Activated CD4-positive, alpha-beta T cell treated with anti-CD3 and anti-CD28 coated beads, Interleukin-2, amount 10 ng/mL, durations not matched to agents 24 days and 14 days (primary cell): ENCODE measurements at regions of chr6 and their contacts with region 1.

Region 1: DNA sequence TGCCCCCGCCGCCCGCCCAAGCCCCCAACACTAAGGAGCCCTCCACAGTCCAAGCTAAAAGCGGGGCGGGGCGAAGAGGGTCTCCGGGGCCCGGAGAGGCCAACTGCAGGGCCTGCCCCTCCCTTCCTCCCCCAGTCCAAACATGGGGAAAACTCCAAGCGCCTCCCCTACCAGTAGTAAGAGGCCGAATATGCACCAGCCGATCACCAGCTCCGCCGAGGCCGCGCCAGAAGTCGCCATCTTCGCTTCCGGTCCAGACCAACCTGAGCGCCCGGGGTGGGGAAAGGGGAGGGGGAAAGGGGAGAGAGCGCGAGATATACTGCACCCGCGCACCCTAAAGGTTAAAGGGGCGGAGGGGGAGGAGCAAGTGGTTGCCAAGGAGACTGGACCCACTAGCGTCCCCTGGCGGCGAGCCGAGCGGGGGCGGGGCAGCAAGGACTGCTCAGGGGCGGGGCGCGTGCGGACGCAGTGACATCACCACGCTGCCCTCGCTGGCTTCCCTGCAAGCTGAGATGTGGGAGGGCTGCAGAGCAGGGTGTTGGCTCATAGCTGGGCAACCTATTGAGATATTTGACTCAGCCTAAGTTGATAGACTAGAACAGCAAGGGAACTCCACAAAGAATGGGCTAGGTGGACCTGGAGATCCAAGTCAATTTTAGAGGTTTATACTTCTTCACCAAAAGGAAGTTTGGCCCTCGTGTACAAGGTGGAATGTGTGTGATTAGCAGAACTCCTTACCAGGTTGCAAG is at the start of gene LMBRD1:
- DNase-seq: peak; percentile 100
- H3K4me3 Mint-ChIP-seq: peak within 1 kb of the TSS; percentile 90
- H3K27ac Mint-ChIP-seq: peak within 1 kb of the TSS; percentile 84
- H3K4me1 Mint-ChIP-seq: peaks cover 31% of the 10 kb centered on the region
- H3K27me3 Mint-ChIP-seq: no peaks in the 10 kb centered on the region
- total RNA-seq, gene LMBRD1: 13.0 and 13.5 TPM in 2 replicates

Region 2: DNA sequence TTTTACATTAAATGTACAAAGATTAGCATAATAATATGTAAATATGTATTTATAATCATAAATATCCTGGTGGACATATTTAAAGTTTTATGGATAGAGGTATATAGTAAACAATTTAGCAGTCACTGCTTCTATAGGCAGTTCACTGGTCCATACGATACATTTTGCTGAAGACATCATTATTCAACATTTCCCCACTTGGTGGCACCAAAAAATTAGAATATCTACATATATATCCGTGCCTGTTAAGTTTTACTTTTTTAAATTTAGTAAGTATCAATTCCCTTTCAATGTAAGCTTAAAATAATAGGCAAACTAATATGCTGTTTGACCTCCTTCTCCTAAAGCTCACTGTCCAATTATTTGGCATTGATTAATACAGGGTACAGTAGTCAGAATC is 64.2 kb before region 1 on chr6:
- intact Hi-C with region 1: loop called (anchors 5 kb)
- DNase-seq: no peak
- H3K4me3 Mint-ChIP-seq: no peak overlapping the region
- H3K27ac Mint-ChIP-seq: no peak overlapping the region
- H3K4me1 Mint-ChIP-seq: no peaks in the 10 kb centered on the region
- H3K27me3 Mint-ChIP-seq: no peaks in the 10 kb centered on the region

Region 3: GRCh38 chr6:69816026-69816425 is 19.2 kb after region 1 on chr6:
- intact Hi-C with region 1: loop called (anchors 1 kb)
- DNase-seq: peak; percentile 68
- H3K4me3 Mint-ChIP-seq: peak overlapping the region; percentile 82
- H3K27ac Mint-ChIP-seq: peak overlapping the region; percentile 86
- H3K4me1 Mint-ChIP-seq: peaks cover 42% of the 10 kb centered on the region
- H3K27me3 Mint-ChIP-seq: no peaks in the 10 kb centered on the region

Region 4: DNA sequence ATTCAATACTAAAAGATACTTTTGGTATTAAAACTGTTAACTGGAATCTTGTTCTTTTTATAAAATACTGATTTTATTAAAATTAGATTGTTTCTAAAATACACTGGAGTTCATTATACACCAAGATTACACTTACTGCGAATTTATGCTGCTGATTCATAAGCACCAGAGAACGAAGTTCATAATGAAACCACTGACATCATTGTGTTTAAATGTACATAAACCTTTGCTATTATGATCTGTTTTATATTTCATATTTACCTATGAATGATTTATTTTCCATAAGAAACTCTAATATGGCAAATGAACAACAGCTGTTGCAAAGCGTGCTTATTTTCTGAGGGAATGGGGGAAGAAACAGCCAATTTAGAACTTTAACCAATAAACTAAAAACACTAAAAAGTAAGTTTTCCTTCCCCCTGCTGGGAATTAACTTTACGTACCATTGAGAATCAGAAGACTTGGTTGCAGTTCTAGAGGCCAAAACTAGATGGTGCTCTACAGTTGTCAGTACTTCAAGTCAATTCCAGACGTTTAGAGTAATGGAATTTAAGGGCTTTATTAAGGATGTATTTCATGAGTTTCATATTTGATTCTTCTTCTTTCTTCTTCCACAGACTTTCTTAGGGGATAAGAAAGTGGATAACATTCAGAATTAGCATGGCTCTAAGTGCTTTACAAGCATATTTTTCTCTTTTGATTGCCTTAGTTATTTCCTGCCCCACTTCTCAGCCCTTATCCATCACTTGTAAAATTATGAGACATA is 38.8 kb after region 1 on chr6:
- intact Hi-C with region 1: loop called (anchors 2 kb)
- DNase-seq: peak; percentile 71
- H3K4me3 Mint-ChIP-seq: no peak overlapping the region
- H3K27ac Mint-ChIP-seq: no peak overlapping the region
- H3K4me1 Mint-ChIP-seq: peaks cover 2% of the 10 kb centered on the region
- H3K27me3 Mint-ChIP-seq: peaks cover 35% of the 10 kb centered on the region

Region 5: DNA sequence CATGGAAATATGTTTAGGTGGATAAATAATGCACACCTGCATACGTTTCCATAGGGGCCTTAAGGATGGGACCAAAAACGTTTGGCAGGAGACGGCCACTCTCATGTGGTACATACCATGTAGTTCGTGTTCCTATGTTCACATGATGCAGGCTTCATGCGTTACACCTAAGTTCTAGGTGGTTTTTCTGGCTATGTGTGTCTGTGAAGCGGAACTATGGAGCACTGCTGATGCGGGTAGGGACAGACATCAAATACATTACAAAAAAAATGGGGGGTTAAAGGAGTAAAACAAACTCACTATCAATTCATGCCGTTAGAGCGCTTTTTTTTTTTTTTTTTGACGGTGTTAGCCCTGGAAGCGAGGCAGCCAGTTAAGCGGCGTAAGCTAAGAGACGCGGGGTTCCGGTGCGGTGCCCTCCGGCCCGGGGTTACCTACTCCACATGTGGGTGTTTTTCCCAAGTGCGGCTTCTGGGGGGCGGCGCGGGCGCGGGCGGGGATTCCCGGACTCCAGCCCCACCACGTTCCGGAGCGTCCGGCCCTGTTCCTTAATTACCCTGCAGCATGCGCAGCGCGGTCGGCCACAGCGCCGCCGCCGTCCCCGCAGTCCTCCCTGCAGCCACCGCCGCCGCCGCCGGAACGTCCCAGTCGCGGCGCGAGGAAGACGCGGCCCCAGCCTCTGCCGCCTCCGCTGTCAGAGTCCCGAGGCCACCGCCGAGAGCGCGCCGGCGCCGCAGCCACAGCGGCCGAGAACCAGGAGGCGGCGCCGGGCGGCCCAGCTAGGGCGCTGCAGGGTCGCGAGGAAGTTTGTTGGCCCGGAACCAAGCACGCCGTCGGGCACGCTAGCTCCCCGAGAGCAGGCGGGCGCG is 70.2 kb after region 1 on chr6:
- intact Hi-C with region 1: loop called (anchors 2 kb)
- DNase-seq: peak; percentile 87
- H3K4me3 Mint-ChIP-seq: peak overlapping the region; percentile 79
- H3K27ac Mint-ChIP-seq: peak overlapping the region; percentile 48
- H3K4me1 Mint-ChIP-seq: peaks cover 18% of the 10 kb centered on the region
- H3K27me3 Mint-ChIP-seq: peaks cover 70% of the 10 kb centered on the region

Region 6: DNA sequence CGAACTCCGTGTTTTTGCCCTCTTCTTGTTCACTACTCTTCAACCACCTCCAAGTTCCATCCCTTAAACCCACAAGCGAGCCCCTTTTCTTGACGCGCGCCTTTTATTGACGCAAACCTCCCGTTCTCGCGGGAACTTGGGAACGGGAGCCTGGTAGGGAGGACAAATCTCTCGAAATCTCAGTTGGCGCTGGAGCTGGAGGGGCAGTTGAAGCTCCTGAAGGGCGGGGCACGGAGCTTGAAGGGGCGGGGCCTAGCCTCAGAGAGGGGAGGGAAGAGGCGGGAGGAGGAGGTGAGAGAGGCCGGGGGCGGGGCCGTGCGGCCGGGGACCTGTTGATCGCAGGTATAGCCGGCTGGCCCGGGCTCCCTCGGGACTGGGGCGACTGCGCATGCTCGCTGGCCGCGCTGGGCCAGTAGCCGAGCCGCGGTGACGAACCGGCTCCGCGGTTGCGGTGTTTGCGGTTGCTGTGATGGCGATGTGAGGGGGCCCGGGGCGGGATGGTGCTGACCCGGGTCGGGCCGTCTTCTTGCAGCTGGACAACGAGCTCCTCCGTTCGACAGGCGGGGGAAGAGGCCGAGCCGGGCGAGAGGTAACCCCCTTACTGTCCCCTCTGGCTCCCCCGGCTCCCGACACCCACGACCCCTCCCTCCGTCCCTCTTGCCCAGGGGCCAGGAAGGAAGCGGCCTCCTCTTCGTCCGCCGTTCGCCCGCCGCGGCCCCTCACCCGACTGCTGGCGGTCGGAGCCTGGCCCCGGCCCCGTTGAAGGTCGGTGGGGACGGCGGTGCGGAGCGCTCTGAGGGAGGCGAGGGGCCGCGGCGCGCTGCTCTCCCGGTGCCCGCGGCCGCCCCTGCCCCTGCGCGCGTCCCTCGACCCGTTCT is 616.5 kb after region 1 on chr6 and contains the start of gene FAM135A:
- intact Hi-C with region 1: loop called (anchors 2 kb)
- DNase-seq: peak; percentile 98
- H3K4me3 Mint-ChIP-seq: peak within 1 kb of the TSS; percentile 92
- H3K27ac Mint-ChIP-seq: peak within 1 kb of the TSS; percentile 87
- H3K4me1 Mint-ChIP-seq: peaks cover 27% of the 10 kb centered on the region
- H3K27me3 Mint-ChIP-seq: peaks cover 7% of the 10 kb centered on the region
- total RNA-seq, gene FAM135A: 7.7 and 10.5 TPM in 2 replicates

Region 7: DNA sequence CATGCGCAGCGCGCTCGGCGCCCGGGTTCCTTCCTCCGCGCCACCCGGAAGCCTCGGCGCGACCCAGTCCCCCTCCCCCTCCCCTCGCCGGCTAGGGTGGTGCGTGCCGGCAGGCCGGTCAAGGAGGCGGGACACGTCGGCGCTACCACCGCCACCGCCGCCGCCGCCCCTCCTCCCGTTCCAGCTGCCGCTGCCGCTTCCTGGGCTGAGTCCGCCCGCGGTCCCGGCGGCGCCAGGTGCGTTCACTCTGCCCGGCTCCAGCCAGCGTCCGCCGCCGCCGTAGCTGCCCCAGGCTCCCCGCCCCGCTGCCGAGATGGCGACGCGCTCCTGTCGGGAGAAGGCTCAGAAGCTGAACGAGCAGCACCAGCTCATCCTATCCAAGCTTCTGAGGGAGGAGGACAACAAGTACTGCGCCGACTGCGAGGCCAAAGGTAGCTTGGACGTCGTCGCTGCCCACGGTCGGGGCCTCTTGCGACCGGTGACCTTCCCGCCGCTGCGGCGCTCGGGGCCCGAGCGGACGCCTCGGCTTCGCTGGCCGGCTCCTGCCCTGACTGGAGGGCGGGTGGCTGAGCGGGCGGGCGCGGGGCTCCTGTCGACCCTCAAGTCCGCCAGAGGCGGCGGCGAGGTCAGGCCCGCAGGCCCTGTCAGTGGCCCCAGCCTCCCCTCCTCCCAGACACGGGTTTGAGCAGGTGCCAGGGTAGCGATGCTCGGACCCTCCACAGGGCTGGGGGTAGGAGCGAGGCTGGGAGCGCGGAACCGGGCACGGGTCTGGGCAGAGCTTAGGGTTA is 871.1 kb after region 1 on chr6 and contains the start of gene SMAP1:
- intact Hi-C with region 1: loop called (anchors 5 kb)
- DNase-seq: peak; percentile 98
- H3K4me3 Mint-ChIP-seq: peak within 1 kb of the TSS; percentile 90
- H3K27ac Mint-ChIP-seq: peak within 1 kb of the TSS; percentile 94
- H3K4me1 Mint-ChIP-seq: peaks cover 52% of the 10 kb centered on the region
- H3K27me3 Mint-ChIP-seq: no peaks in the 10 kb centered on the region
- total RNA-seq, gene SMAP1: 21.5 and 23.2 TPM in 2 replicates